Caco-2 (cell line): ENCODE measurements at regions of chr4 and their contacts with region 1.

Region 1: GRCh38 chr4:498328-498904 is 540 bp downstream of the ZNF721 start:
- DNase-seq: no peak
- H3K4me3 ChIP-seq: peak overlapping the region; percentile 98
- H3K4me3 Mint-ChIP-seq: peak overlapping the region; percentile 99
- H3K27ac Mint-ChIP-seq: peak overlapping the region; percentile 99
- H3K4me1 ChIP-seq: peaks cover 5% of the 10 kb centered on the region
- H3K4me1 Mint-ChIP-seq: no peaks in the 10 kb centered on the region
- H3K27me3 ChIP-seq: no peaks in the 10 kb centered on the region
- H3K27me3 Mint-ChIP-seq: no peaks in the 10 kb centered on the region
- CTCF ChIP-seq: no peak

Region 2: GRCh38 chr4:473570-474457 is 24.6 kb before region 1 on chr4:
- CTCF ChIA-PET with region 1: no interaction called
- POLR2A ChIA-PET with region 1: interaction called, 3 read pairs
- intact Hi-C with region 1: loop called (anchors 2 kb)
- DNase-seq: peak; percentile 97
- H3K4me3 ChIP-seq: peak overlapping the region; percentile 64
- H3K4me3 Mint-ChIP-seq: peak overlapping the region; percentile 92
- H3K27ac Mint-ChIP-seq: peak overlapping the region; percentile 94
- H3K4me1 ChIP-seq: no peaks in the 10 kb centered on the region
- H3K4me1 Mint-ChIP-seq: peaks cover 5% of the 10 kb centered on the region
- H3K27me3 ChIP-seq: no peaks in the 10 kb centered on the region
- H3K27me3 Mint-ChIP-seq: no peaks in the 10 kb centered on the region
- CTCF ChIP-seq: no peak

Region 3: DNA sequence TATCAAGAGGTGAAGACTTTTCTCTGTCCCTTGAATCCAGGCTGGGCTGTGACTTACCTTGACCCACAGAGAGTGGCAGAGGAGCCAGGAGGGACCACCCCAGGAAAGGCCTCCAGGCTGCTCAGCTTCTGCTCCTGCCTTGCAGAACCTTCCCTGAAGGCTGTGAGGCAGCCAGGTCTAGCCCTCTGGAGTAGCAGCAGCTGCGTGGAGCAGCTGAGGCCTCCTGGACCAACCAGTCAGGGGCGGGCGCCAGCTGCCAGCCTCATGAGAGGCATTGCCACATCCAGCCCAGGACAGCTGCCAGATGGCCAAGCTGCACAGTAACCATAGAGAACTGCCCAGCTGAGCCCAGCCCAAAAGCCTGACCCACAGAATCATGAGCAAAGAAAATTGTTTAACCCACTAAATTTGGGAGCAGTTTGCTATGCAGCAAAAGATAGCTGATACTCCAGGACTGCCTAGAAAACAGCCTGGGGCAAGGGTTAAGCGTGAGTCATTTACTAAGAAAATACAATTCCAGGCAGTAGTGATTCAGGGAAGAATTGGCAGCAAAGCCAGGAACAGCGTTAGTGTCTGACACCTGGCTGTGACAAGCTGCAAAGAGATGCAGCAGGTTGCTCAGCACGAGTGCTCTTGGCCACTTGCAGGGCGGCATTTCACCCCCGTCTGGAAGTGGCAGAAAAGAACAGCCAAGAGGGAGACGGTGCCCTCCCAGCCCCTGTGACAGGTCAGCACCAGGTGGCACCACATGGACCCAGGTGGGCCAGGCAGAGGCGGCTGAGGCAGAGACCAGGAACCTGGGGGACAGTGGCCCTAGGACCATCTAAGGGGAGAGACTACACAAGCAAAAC is 112.2 kb after region 1 on chr4:
- CTCF ChIA-PET with region 1: no interaction called
- POLR2A ChIA-PET with region 1: interaction called, 12 read pairs
- intact Hi-C with region 1: no loop called
- DNase-seq: peak in 1 of 2 experiments; percentile 27
- H3K4me3 ChIP-seq: no peak overlapping the region
- H3K4me3 Mint-ChIP-seq: no peak overlapping the region
- H3K27ac Mint-ChIP-seq: no peak overlapping the region
- H3K4me1 ChIP-seq: 0 out of 2 replicates have a peak, but pooled peaks cover 6% of the 10 kb centered on the region
- H3K4me1 Mint-ChIP-seq: peaks cover 6% of the 10 kb centered on the region
- H3K27me3 ChIP-seq: no peaks in the 10 kb centered on the region
- H3K27me3 Mint-ChIP-seq: peaks cover 19% of the 10 kb centered on the region
- CTCF ChIP-seq: no peak